Mammary epithelial cell (primary cell): ENCODE measurements at regions of chr18 and their contacts with region 1.

Region 1: DNA sequence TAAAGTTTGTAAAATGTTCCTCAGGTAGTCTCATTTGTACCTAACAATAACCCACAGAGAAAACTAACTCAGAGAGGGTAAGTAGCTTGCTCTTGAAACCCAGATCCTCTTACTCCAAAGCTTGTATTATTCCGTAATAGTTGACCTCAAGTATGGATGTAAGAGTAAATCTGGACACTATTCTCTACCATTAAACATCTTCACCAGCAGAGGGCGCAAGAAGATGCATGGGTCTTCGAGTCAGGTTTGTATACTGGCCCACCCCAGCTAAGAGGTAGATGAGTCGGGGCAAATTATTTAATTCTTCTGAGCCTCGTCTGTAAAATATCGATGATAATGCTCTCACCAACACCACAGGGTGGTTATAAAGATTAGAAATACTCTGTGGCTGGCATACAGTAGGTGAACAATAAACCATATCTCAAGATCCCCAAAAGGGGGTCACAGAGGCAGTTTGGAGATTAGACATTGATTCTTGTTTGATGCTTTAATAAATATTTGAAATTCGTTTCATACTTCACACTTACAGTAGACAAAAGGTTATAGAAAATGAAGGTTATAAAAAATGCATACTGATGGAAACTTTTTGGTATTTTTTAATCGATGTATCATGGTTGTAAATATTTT is 3.5 kb upstream of the CABLES1 start:
- DNase-seq: peak; percentile 60
- H3K4me3 ChIP-seq: no peak overlapping the region
- H3K27ac ChIP-seq: no peak overlapping the region
- H3K4me1 ChIP-seq: peaks cover 24% of the 10 kb centered on the region
- H3K27me3 ChIP-seq: no peaks in the 10 kb centered on the region
- CTCF ChIP-seq: peak; percentile 67 to 75

Region 2: DNA sequence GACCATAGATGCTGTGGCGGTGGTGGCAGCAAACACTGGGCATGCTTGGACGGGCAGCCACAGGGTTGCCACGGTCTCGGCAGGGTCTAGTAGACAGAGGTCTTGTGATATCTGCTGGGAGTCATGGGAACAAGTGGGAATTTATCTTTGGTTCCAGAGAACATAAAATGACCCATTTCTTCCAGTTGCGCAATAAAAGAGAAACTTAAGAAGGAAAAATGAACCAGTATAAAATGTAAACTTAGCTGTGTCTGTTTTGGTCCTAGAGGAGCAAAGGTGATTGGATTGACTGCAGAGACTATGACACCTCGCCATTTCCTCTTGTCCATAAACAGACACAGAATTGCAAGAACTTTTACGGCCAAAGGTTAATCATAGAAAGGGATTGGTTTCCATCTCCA is 331.3 kb before region 1 on chr18:
- CTCF ChIA-PET with region 1: no interaction called
- dilution Hi-C with region 1: no loop called
- in situ Hi-C with region 1: no loop called
- intact Hi-C with region 1: loop called (anchors 5 kb)
- DNase-seq: no peak
- H3K4me3 ChIP-seq: no peak overlapping the region
- H3K27ac ChIP-seq: no peak overlapping the region
- H3K4me1 ChIP-seq: peaks cover 6% of the 10 kb centered on the region
- H3K27me3 ChIP-seq: no peaks in the 10 kb centered on the region
- CTCF ChIP-seq: no peak

Region 3: GRCh38 chr18:23077493-23078256 is 54.1 kb before region 1 on chr18:
- CTCF ChIA-PET with region 1: no interaction called
- dilution Hi-C with region 1: loop called (anchors 5 kb)
- in situ Hi-C with region 1: no loop called
- intact Hi-C with region 1: no loop called
- DNase-seq: no peak
- H3K4me3 ChIP-seq: no peak overlapping the region
- H3K27ac ChIP-seq: no peak overlapping the region
- H3K4me1 ChIP-seq: no peaks in the 10 kb centered on the region
- H3K27me3 ChIP-seq: no peaks in the 10 kb centered on the region
- CTCF ChIP-seq: peak in 1 of 2 donors; percentile 27

Region 4: DNA sequence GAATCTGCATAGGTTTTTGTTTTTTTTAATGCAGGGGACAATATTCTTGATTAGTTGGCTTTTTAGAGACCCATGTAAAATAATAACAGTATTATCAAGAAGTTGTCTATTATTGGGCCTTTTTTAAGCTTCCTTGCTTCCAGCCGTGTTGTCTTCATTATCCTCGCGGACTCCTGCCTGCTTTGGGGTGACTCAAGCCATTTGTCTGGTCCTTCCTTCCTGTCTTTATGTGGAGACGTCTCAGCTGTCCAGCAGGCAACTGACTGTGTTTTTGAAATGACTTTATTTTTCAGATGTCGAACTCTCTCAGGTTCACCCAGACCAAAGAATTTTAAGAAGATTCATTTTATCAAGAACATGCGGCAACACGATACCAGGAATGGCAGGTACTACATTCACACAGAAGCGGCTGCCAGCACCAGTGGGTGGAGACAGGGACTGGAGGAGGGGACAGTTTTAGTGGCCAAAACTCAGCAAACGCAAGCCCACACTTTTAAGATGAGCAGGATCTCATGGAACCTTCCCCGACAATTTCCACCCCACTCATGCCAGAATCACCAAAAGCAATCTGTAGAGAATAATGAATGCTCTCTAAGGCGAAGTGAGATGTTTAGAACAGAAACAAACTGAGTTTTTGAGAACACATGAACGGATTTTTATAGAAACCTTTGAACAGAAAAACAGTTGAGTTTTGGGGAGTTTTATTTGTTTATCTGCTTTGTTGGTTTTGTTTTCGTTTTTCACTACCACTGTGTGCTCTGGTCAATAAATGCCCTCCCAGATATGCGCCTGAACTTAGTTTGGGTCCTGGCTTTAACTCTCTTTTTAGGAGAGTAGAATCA is 62.6 kb after region 1 on chr18:
- CTCF ChIA-PET with region 1: no interaction called
- dilution Hi-C with region 1: no loop called
- in situ Hi-C with region 1: no loop called
- intact Hi-C with region 1: no loop called
- DNase-seq: peak; percentile 16
- H3K4me3 ChIP-seq: no peak overlapping the region
- H3K27ac ChIP-seq: no peak overlapping the region
- H3K4me1 ChIP-seq: peaks cover 16% of the 10 kb centered on the region
- H3K27me3 ChIP-seq: no peaks in the 10 kb centered on the region
- CTCF ChIP-seq: no peak

Region 5: DNA sequence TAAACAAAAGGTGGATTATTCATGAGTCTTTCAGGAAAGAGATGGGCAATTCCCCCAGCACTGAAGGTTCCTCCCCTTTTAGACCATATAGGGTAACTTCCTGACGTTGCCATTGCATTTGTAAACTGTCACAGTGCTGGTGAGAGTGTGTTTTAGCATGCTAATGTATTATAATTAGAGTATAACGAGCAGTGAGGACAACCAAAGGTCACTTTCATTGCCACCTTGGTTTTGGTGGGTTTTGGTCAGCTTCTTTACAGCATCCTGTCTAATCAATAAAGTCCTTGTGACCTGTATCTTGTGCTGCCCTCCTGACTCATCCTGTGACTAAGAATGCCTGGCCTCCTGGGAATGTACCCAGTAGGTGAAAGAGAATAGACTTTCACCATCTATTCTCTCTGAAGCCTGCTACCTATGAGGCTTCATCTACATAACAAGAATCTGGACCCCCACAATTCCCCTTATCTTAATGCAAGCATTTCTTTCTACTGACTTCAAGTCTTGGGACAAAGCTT is 152.2 kb after region 1 on chr18:
- CTCF ChIA-PET with region 1: no interaction called
- dilution Hi-C with region 1: no loop called
- in situ Hi-C with region 1: no loop called
- intact Hi-C with region 1: loop called (anchors 5 kb)
- DNase-seq: peak; percentile 93
- H3K4me3 ChIP-seq: no peak overlapping the region
- H3K27ac ChIP-seq: peak overlapping the region; percentile 58
- H3K4me1 ChIP-seq: peaks cover 33% of the 10 kb centered on the region
- H3K27me3 ChIP-seq: no peaks in the 10 kb centered on the region
- CTCF ChIP-seq: no peak

Region 6: DNA sequence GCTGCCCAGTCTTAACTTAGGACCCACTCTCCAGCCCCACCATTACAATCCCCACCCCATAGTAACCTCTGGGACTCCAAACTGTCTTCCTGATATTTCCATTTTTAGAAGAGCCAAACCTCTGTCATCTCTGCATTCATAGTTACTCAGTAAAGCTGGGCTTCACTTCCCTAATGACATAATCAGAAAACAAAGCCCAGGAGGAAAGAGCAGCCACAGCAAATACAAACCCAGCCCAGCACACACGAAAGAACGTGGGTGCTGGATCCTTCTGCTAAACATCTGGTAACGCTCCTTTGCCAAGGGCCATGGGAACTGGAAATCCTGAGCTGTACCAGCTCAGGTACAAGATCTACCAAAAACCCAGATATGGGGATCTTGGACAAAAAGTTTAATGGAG is 284.5 kb after region 1 on chr18:
- CTCF ChIA-PET with region 1: no interaction called
- dilution Hi-C with region 1: no loop called
- in situ Hi-C with region 1: loop called in 1 of 2 experiments (anchors 10 kb)
- intact Hi-C with region 1: loop called (anchors 1 kb)
- DNase-seq: no peak
- H3K4me3 ChIP-seq: no peak overlapping the region
- H3K27ac ChIP-seq: no peak overlapping the region
- H3K4me1 ChIP-seq: no peaks in the 10 kb centered on the region
- H3K27me3 ChIP-seq: no peaks in the 10 kb centered on the region
- CTCF ChIP-seq: no peak

Region 7: DNA sequence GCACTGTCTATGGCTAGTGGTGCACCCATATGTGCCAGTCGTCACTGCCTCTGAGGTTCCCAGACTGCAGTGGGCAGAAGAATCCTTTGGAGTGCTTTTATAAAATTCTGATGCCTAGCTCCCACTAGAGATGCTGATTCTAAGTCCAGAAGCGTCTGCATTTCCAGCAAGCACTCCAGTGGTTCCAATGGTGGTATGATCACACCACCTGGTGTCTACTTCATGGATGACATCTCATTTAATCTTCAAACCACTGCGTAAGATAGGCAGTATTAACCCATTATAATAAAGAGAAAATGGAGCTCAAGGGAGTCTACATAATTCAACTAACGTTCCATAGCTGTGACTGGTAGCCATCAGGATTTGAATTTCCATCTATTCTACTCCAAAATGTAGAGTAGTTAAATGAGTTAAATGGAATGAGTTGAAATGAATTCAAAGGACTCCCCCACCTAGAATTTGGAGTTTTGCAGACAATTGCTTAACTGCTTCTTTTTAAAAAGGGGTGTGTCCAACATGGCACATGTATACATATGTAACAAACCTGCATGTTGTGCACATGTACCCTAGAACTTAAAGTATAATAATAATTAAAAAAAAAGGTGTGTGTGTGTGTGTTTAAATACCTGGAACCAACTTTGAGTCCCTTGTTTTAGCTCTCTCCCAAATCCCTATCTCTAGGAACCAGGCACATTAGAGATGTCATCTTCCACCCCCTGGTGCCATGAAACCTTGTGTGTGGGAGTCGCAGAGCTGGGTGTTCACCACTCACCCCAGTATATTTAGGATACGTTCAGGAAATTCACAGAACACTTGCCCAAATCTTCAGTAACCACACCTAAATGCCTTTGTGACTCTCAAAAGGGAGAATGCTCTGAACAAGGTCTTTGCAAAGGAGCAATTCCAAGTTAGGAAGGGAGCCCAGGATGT is 571.5 kb after region 1 on chr18:
- CTCF ChIA-PET with region 1: no interaction called
- dilution Hi-C with region 1: no loop called
- in situ Hi-C with region 1: no loop called
- intact Hi-C with region 1: loop called (anchors 10 kb)
- DNase-seq: peak; percentile 63
- H3K4me3 ChIP-seq: no peak overlapping the region
- H3K27ac ChIP-seq: no peak overlapping the region
- H3K4me1 ChIP-seq: no peaks in the 10 kb centered on the region
- H3K27me3 ChIP-seq: no peaks in the 10 kb centered on the region
- CTCF ChIP-seq: peak; percentile 54 to 72